PC-3 (cell line): ENCODE measurements at regions of chr4 and their contacts with region 1.

Region 1: GRCh38 chr4:74531963-74532794 is 87.2 kb downstream of the AREG start:
- DNase-seq: peak; percentile 85
- ATAC-seq: peak; percentile 66
- H3K4me3 ChIP-seq: no peak overlapping the region
- H3K27ac ChIP-seq: peak overlapping the region; percentile 87
- H3K4me1 ChIP-seq: peaks cover 58% of the 10 kb centered on the region
- H3K27me3 ChIP-seq: no peaks in the 10 kb centered on the region
- CTCF ChIP-seq: peak; percentile 85

Region 2: GRCh38 chr4:74189331-74190043 is 342.7 kb before region 1 on chr4:
- CTCF ChIA-PET with region 1: interaction called, 5 read pairs
- POLR2A ChIA-PET with region 1: no interaction called
- intact Hi-C with region 1: loop called (anchors 5 kb)
- DNase-seq: peak; percentile 79
- ATAC-seq: peak; percentile 65
- H3K4me3 ChIP-seq: no peak overlapping the region
- H3K27ac ChIP-seq: peak overlapping the region; percentile 17
- H3K4me1 ChIP-seq: peaks cover 19% of the 10 kb centered on the region
- H3K27me3 ChIP-seq: no peaks in the 10 kb centered on the region
- CTCF ChIP-seq: peak; percentile 91

Region 3: GRCh38 chr4:74376888-74377483 is 155.2 kb before region 1 on chr4:
- CTCF ChIA-PET with region 1: interaction called, 7 read pairs
- POLR2A ChIA-PET with region 1: interaction called, 5 read pairs
- intact Hi-C with region 1: loop called (anchors 1 kb)
- DNase-seq: peak; percentile 60
- ATAC-seq: peak; percentile 14; the same call in 1 of the 2 replicates
- H3K4me3 ChIP-seq: peak overlapping the region; percentile 56
- H3K27ac ChIP-seq: peak overlapping the region; percentile 100
- H3K4me1 ChIP-seq: peaks cover 40% of the 10 kb centered on the region
- H3K27me3 ChIP-seq: no peaks in the 10 kb centered on the region
- CTCF ChIP-seq: peak; percentile 71

Region 4: GRCh38 chr4:74437866-74438265 is 94.3 kb before region 1 on chr4:
- CTCF ChIA-PET with region 1: no interaction called
- POLR2A ChIA-PET with region 1: no interaction called
- intact Hi-C with region 1: no loop called
- DNase-seq: no peak
- ATAC-seq: no peak
- H3K4me3 ChIP-seq: no peak overlapping the region
- H3K27ac ChIP-seq: no peak overlapping the region
- H3K4me1 ChIP-seq: peaks cover 16% of the 10 kb centered on the region; the same call in 1 of the 2 replicates
- H3K27me3 ChIP-seq: no peaks in the 10 kb centered on the region
- CTCF ChIP-seq: no peak

Region 5: DNA sequence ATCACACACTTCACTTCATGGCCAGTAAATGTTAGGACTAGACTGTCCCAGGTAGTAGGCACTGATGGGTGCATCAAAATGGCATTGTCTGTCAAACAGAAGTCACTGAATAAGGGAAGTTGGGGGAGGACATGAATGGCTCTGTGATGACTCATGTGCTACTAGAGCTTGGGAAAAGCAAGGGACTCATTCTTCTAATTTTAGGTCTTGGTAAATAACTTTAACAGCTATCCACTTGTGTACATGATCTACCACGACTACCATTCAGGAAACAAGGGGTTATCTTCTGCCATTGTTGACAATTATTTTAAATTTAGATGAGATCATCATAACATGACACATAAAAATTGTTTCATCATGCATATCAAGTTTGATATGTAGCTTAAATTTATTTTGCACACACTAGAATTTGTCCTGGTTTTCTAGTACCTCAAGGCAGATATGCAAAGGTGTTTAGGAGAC is 80.9 kb before region 1 on chr4:
- CTCF ChIA-PET with region 1: no interaction called
- POLR2A ChIA-PET with region 1: interaction called, 4 read pairs
- intact Hi-C with region 1: loop called (anchors 2 kb)
- DNase-seq: peak; percentile 85
- ATAC-seq: peak; percentile 37
- H3K4me3 ChIP-seq: peak overlapping the region; percentile 76; the same call in 1 of the 2 replicates
- H3K27ac ChIP-seq: peak overlapping the region; percentile 80
- H3K4me1 ChIP-seq: peaks cover 88% of the 10 kb centered on the region
- H3K27me3 ChIP-seq: no peaks in the 10 kb centered on the region
- CTCF ChIP-seq: no peak

Region 6: DNA sequence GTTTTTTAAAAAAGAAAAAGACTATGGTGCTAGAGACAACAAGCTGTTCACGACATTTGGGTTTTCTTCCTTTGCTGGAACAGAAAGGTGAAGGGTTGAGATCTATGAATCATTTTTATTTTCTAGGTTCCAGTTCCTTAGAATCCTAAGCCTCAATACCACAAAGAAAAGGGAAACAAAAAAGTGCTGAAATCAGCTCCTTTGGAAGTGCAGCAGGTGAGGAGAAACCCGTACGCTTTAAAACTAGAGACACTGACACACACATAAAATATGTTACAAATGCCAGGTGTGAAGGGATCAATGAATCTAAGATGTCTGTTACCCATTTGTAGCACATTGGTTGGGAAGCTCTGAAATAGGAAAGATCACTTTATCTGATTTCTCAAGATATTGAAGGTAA is 37.9 kb after region 1 on chr4:
- CTCF ChIA-PET with region 1: no interaction called
- POLR2A ChIA-PET with region 1: no interaction called
- intact Hi-C with region 1: no loop called
- DNase-seq: no peak
- ATAC-seq: no peak
- H3K4me3 ChIP-seq: no peak overlapping the region
- H3K27ac ChIP-seq: peak overlapping the region; percentile 44
- H3K4me1 ChIP-seq: peaks cover 20% of the 10 kb centered on the region
- H3K27me3 ChIP-seq: no peaks in the 10 kb centered on the region
- CTCF ChIP-seq: no peak

Region 7: DNA sequence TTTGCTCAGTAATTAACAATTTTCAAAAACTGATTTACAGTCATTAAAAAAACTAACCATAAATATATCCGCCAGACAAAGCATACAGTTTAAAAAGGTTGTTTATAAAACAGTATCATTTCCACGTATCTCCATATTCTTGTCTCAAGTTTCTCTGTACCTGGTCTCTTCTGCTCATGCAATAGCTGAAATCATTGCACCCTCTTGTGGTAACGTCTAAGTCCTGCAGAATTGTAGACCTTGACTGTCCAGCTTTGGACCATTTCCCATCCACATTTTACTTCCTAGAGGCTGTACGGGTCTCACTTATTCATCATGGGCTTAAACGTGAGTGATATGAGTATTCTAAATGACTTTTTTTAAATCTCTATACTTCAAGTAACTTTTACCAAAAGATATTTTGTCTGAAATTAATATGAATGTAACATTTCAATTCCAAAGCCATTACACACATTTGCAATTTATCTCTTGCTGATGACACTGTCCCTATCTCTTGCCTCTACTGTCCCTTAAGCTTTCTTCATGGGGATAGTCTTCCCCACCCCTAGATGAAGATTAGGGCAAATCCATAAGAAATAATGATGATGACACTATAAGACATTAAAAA is 143.6 kb after region 1 on chr4:
- CTCF ChIA-PET with region 1: interaction called, 5 read pairs
- POLR2A ChIA-PET with region 1: no interaction called
- intact Hi-C with region 1: loop called (anchors 1 kb)
- DNase-seq: peak; percentile 82
- ATAC-seq: peak; percentile 81
- H3K4me3 ChIP-seq: no peak overlapping the region
- H3K27ac ChIP-seq: no peak overlapping the region
- H3K4me1 ChIP-seq: peaks cover 12% of the 10 kb centered on the region
- H3K27me3 ChIP-seq: no peaks in the 10 kb centered on the region
- CTCF ChIP-seq: peak; percentile 86